PC-3 (cell line): ENCODE measurements at regions of chr4 and their contacts with region 1.

Region 1: DNA sequence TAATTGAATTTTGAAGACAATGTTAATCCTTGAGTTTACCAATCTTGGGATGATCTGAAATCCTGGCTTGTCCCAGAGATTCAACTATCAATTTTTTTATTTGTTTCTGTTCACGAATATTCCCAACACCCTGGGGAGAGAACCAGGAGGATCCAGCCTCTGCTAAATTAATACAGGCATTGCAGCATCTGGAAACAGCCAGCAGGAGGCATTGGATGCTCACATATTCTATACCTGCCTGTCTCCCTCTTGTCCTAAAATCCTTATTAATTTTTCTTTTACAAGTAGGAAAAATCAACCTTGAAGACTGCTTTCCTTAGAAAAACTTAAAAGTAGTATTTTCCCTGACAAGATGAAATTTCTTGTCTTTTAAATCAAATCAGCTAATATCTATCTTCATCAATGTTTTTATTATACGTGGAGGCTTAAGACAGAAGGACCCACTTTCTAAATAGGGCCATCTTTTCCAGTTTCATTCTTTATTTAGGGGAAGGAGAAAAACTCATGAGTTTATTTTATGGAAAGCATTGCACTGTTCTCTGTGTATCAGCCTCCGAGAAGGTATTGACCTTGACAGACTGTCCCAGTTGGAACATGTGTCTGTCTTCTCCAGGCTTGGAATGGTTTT is 102.4 kb downstream of the CLNK start:
- DNase-seq: peak; percentile 63
- ATAC-seq: peak; percentile 42
- H3K4me3 ChIP-seq: no peak overlapping the region
- H3K27ac ChIP-seq: no peak overlapping the region
- H3K4me1 ChIP-seq: no peaks in the 10 kb centered on the region
- H3K27me3 ChIP-seq: no peaks in the 10 kb centered on the region
- CTCF ChIP-seq: peak; percentile 83

Region 2: DNA sequence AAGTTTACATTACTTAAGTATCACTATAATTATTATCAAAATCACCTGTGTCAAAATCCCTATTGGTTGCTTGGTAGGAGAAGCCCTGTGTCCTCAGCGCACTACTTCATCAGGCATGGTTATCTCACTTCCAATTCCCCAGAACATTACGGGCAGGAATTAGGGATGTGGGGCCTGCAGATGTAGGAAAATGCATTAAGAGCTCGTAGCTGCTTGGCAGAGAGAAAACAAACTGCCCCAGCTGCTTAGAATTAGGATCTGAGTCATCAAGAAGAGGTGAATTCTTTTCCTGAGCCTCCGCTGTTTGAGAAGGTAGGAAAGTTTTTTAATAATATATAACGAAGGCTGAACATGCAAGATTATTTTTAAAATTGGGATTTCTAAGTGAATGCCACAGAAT is 133.5 kb after region 1 on chr4:
- CTCF ChIA-PET with region 1: no interaction called
- POLR2A ChIA-PET with region 1: interaction called, 3 read pairs
- intact Hi-C with region 1: loop called (anchors 1 kb)
- DNase-seq: peak; percentile 20
- ATAC-seq: no peak
- H3K4me3 ChIP-seq: no peak overlapping the region
- H3K27ac ChIP-seq: no peak overlapping the region
- H3K4me1 ChIP-seq: 0 out of 2 replicates have a peak, but pooled peaks cover 4% of the 10 kb centered on the region
- H3K27me3 ChIP-seq: no peaks in the 10 kb centered on the region
- CTCF ChIP-seq: no peak

Region 3: GRCh38 chr4:11428899-11429698 is 846.9 kb after region 1 on chr4:
- CTCF ChIA-PET with region 1: no interaction called
- POLR2A ChIA-PET with region 1: no interaction called
- intact Hi-C with region 1: loop called (anchors 5 kb)
- DNase-seq: peak; percentile 86
- ATAC-seq: peak; percentile 90
- H3K4me3 ChIP-seq: peak overlapping the region; percentile 90
- H3K27ac ChIP-seq: peak overlapping the region; percentile 91
- H3K4me1 ChIP-seq: peaks cover 10% of the 10 kb centered on the region; the same call in 1 of the 2 replicates
- H3K27me3 ChIP-seq: no peaks in the 10 kb centered on the region
- CTCF ChIP-seq: peak; percentile 64

Region 4: DNA sequence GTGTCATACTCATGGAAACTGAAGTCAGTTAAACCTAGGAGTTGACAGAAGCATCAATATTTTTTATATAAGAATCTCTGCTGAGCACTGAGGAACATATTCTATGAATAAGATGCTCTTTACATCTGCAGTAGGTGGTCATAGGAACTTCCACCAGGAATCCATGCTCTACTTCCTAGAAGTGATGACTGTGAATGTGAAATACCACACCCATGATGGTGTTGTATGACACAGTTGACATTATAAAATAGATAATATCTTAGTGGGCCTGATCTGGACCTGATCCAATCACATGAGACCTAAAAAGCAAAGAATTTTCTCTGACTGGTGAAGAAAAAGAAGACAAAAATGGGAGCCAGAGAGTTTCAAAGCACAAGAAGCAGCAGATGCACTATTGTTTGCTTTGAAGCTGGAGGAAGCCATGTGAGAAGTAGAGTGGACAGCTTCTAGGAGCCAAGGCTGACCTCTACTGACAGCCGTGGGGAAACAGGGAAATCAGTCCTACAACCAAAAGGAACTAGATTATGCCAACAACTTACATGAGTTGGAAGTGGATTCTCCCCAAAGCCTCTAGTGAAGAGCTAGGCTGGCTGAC is 915.1 kb after region 1 on chr4:
- CTCF ChIA-PET with region 1: no interaction called
- POLR2A ChIA-PET with region 1: no interaction called
- intact Hi-C with region 1: loop called (anchors 2 kb)
- DNase-seq: peak; percentile 63
- ATAC-seq: peak; percentile 62
- H3K4me3 ChIP-seq: no peak overlapping the region
- H3K27ac ChIP-seq: peak overlapping the region; percentile 99
- H3K4me1 ChIP-seq: peaks cover 30% of the 10 kb centered on the region
- H3K27me3 ChIP-seq: no peaks in the 10 kb centered on the region
- CTCF ChIP-seq: peak; percentile 47; the same call in 1 of the 2 replicates

Region 5: GRCh38 chr4:11623726-11624037 is 1041.5 kb after region 1 on chr4:
- CTCF ChIA-PET with region 1: no interaction called
- POLR2A ChIA-PET with region 1: no interaction called
- intact Hi-C with region 1: loop called (anchors 10 kb)
- DNase-seq: peak; percentile 63
- ATAC-seq: peak; percentile 84
- H3K4me3 ChIP-seq: no peak overlapping the region
- H3K27ac ChIP-seq: peak overlapping the region; percentile 82
- H3K4me1 ChIP-seq: peaks cover 58% of the 10 kb centered on the region
- H3K27me3 ChIP-seq: no peaks in the 10 kb centered on the region
- CTCF ChIP-seq: peak; percentile 69

Region 6: GRCh38 chr4:11954093-11954492 is 1371.9 kb after region 1 on chr4:
- CTCF ChIA-PET with region 1: no interaction called
- POLR2A ChIA-PET with region 1: no interaction called
- intact Hi-C with region 1: loop called (anchors 10 kb)
- DNase-seq: peak; percentile 42
- ATAC-seq: no peak
- H3K4me3 ChIP-seq: no peak overlapping the region
- H3K27ac ChIP-seq: no peak overlapping the region
- H3K4me1 ChIP-seq: no peaks in the 10 kb centered on the region
- H3K27me3 ChIP-seq: no peaks in the 10 kb centered on the region
- CTCF ChIP-seq: peak; percentile 65